Cardiac septum (tissue), 1 donor: ENCODE measurements at regions of chr1 and their contacts with region 1.

Region 1: DNA sequence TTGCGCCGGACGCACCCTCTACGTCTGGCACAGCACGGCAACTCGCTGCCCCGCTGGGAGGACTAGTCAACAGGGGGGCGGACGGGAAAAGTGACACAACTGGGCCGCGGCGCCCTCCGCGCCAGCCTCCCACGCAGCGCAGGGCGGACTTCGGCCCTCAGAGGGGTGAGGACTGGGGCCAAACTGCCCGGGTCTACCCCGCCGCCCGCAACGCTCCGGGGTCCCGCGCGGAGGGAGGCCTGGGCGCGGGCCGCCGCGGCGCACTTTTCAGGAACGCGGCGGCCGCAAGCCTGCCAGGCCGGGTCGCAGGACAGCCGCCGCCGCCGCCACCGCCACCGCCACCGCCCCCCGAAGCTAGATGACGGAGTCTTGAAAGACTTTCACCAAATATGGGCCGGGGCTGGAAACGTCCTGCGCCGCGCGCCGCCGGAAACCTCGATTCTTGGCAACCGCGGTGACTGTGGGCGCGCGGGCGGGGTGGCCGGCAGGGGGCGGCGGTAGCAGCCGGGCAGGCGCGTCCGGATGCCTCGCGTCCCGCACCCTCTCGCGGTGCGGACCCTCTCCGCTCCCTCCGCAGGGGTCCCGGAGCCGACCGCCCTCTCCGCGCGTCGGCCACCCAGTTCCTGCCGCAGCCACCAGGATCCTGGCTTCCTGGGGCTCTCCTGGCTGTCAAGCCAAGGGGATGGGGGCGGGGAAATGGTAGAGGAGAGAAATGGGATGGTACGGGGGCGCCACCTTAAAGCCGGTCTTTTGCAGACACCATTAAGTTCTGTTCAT is 3.7 kb upstream of the CCN1 start:
- DNase-seq: peak; percentile 93

Region 2: DNA sequence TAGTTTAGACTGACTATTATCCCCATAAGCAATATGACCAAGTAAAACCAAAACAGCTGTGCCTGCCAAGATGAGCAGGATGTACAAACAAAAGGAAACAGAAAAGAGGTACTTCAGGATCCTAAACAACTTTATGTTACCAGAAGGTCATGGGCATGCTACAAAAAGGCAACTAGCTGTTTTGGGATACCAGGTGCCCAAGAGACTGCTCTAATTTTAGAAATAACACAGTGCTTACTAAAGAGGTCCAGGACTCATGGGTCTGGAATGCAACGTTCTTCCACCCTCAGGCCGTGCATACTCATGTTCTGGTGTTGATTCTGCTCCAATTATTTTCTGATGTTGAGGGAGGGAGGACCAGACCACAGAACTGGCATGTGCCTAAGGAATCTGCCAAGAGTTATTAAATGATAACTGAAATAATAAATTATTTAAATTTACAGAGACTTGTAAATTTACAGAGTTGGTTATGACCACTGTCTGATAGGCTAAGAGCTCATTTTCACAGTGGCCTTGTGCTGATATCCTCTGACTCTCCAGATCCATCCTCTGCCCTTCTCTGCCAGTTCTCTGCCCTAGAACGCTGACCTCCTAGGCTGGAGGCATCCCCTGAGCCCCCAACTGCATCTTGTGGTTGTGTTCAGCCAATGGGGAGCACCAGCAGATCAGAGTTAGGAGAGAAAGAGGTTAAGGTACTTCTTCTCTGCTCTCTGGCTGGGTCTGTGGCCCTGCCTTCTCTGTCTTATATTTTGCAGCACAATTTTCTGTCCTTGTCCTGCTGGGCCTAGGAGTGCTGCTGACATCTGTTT is 262.7 kb before region 1 on chr1:
- intact Hi-C with region 1: loop called (anchors 2 kb)
- DNase-seq: no peak

Region 3: DNA sequence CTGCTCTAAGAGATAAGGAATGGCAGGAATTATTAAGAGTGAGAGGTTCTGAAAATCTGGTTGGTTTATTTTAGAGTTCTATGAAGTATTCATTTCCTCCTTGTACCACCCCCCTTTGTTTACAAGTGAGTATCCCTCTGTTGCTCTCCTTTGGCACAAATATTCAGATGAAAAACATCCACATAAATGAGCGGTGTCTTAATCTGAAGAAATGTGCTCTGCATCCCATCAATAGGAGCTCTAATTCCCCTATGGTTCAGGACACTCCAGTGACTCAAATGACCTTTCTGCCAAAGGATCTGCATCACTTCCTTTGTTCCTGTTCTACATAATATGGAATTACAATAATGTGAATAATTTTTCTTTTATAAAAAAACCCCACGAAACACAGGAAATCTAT is 128.5 kb before region 1 on chr1:
- intact Hi-C with region 1: loop called (anchors 5 kb)
- DNase-seq: no peak

Region 4: GRCh38 chr1:85494904-85495266 is 81.9 kb before region 1 on chr1:
- intact Hi-C with region 1: loop called (anchors 2 kb)
- DNase-seq: no peak

Region 5: GRCh38 chr1:85692730-85693314 is 116.0 kb after region 1 on chr1:
- intact Hi-C with region 1: loop called (anchors 5 kb)
- DNase-seq: no peak